Activated naive CD8-positive, alpha-beta T cell treated with anti-CD3 and anti-CD28 coated beads, Interleukin-2, amount 10 ng/mL, durations not matched to agents 7 days and 5 days (primary cell): ENCODE measurements at regions of chr6 and their contacts with region 1.

Region 1: GRCh38 chr6:127918506-127919427 is 17.9 kb upstream of the THEMIS start:
- DNase-seq: no peak
- ATAC-seq: peak; percentile 73
- H3K4me3 Mint-ChIP-seq: peak overlapping the region; percentile 75
- H3K27ac Mint-ChIP-seq: peak overlapping the region; percentile 91
- H3K4me1 Mint-ChIP-seq: peaks cover 66% of the 10 kb centered on the region
- H3K27me3 Mint-ChIP-seq: no peaks in the 10 kb centered on the region

Region 2: DNA sequence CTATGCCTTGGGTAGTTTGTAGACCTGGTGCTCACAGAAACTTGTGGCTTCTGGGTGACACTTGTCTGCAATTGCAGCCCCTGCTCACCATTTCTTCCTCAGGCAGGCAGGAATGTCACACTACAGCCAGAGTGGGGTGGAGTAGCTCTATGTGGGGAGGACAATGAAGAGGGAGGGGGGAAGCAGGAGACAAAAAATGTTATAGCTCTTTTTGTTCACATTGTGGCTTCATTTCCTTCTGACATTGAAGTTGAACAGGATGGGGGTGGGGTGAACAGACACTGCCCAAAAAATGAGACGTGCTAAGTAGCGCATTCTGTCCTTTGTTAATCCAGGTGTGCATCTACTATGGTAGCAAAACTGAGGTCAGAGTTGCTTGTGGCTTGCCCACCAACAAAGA is 17.8 kb before region 1 on chr6 and contains the start of gene THEMIS:
- POLR2A ChIA-PET with region 1: interaction called, 30 read pairs
- DNase-seq: peak; percentile 66
- ATAC-seq: peak; percentile 77
- H3K4me3 Mint-ChIP-seq: peak within 1 kb of the TSS; percentile 99
- H3K27ac Mint-ChIP-seq: peak within 1 kb of the TSS; percentile 95
- H3K4me1 Mint-ChIP-seq: peaks cover 39% of the 10 kb centered on the region
- H3K27me3 Mint-ChIP-seq: no peaks in the 10 kb centered on the region
- total RNA-seq, gene THEMIS: 152 to 155 TPM

Region 3: GRCh38 chr6:127907960-127908640 is 10.7 kb before region 1 on chr6:
- POLR2A ChIA-PET with region 1: interaction called, 12 read pairs
- DNase-seq: no peak
- ATAC-seq: peak; percentile 55
- H3K4me3 Mint-ChIP-seq: peak overlapping the region; percentile 87
- H3K27ac Mint-ChIP-seq: peak overlapping the region; percentile 87
- H3K4me1 Mint-ChIP-seq: peaks cover 48% of the 10 kb centered on the region
- H3K27me3 Mint-ChIP-seq: no peaks in the 10 kb centered on the region

Region 4: DNA sequence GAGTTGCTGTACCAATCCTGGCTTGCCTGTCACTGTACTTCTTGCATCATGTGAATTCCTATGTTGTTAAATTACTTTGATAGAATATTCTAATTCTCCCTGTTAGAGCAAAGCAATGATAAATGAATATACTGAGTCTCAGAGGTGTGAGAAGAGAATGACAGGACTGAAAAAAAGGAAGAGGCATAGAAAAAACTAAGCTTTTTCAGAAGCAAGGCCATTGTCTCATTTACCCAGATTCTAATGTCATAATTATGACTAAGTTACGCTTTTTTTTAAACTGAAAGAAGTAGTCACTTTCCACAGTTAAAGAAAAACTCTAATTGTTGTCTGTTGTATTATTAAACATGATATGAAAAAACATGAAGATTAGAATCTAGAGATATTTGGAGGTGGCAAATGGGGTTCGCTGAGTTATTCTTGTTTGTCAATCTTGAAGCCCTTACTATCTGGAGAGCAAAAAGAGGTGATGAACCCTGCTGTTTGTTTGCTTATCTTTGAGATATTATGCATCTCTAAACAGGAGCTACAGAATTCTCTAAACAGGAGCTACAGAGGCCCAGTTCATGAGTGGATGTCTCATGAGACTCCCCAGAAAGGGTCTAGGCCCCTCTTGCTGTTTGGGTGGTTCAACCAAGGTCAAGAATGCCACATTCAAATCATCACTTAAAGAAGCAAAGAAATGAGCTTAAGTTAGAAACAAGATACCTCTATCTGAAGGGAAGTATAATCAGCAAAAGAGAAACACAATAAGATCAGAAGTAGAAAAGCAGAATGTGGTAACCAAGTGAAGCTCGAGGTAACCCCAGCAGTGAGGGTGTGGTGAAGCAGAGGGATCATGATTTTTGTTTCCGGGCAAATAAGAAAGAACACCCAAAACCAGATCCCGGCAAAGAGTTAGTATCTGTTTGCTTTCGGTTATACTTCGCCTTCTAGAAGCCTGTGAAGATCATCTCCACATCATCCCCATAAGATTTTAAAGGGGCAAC is 15.4 kb after region 1 on chr6:
- POLR2A ChIA-PET with region 1: interaction called, 12 read pairs
- DNase-seq: no peak
- ATAC-seq: peak; percentile 95
- H3K4me3 Mint-ChIP-seq: peak overlapping the region; percentile 73
- H3K27ac Mint-ChIP-seq: peak overlapping the region; percentile 93
- H3K4me1 Mint-ChIP-seq: peaks cover 47% of the 10 kb centered on the region
- H3K27me3 Mint-ChIP-seq: no peaks in the 10 kb centered on the region

Region 5: DNA sequence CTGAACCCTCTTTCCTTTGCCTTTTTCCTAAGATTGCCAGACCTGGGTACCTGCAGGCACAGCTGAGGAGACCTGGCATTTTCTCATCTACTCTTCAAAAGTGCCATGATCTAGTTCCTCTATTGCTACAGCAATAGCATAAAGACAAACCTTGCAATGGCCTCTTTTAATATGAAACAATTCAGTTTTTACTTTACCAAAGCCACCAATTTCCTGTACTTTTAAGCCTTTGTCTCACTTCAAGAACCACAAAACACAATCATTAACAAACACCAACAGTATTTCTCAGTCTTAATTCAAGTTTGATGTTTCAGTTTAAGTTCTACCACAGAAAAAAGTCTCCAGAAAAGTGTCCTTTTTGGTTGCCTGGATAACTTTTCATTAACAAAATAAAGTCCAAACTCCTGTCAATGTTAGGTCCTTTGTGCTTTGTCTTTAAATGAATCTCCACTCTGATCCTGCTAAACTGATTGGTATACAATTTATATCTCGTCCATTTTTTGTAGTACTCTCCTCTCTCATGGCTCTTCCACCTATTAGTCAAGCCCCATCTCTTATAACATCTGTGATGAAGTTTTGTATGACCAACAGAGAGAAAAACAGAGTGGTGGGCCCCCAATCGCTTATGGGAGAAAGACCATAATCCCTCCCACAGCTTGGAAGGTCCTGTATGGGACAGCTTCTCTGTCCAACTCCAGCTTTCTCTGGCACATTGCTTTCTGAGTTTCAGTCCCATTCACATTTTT is 32.6 kb after region 1 on chr6:
- POLR2A ChIA-PET with region 1: interaction called, 16 read pairs
- DNase-seq: no peak
- ATAC-seq: peak; percentile 69
- H3K4me3 Mint-ChIP-seq: peak overlapping the region; percentile 67
- H3K27ac Mint-ChIP-seq: peak overlapping the region; percentile 95
- H3K4me1 Mint-ChIP-seq: peaks cover 61% of the 10 kb centered on the region
- H3K27me3 Mint-ChIP-seq: no peaks in the 10 kb centered on the region

Region 6: GRCh38 chr6:127971945-127972391 is 53.2 kb after region 1 on chr6:
- POLR2A ChIA-PET with region 1: interaction called, 22 read pairs
- DNase-seq: no peak
- ATAC-seq: peak; percentile 71
- H3K4me3 Mint-ChIP-seq: peak overlapping the region; percentile 88
- H3K27ac Mint-ChIP-seq: peak overlapping the region; percentile 97
- H3K4me1 Mint-ChIP-seq: peaks cover 61% of the 10 kb centered on the region
- H3K27me3 Mint-ChIP-seq: no peaks in the 10 kb centered on the region